Activated B cell treated with CpG ODN at 0.5 μM for 24 hours (primary cell): ENCODE measurements at regions of chr14 and their contacts with region 1.

Region 1: DNA sequence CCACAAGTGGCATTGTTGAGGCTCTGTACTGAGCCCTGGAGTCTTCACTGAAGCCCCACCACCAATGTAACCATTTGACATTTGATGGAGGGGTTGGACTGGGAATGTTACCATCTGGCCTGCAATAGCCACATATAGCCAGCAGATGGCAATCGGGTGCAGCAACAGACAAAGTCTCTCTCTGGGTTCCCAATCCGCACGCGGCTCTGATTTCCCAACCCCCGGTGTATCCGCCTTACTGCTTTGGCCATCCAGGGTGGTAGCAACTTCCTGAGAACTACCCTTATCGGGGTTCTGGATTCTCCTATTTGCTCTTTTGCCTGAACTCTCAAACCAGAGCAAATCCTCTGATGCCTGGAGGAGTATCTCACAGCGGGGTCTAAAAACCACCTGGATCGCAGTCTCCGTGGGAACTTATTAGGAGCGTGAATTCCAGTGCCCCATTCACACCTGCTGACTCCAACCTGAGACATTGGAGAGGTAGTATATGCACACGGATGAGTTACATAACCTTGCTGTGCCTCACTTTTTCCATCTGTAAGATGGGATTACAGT is 14.2 kb downstream of the VRTN start:
- DNase-seq: peak; percentile 56
- ATAC-seq: peak; percentile 87
- H3K4me3 Mint-ChIP-seq: no peak overlapping the region
- H3K27ac Mint-ChIP-seq: no peak overlapping the region
- H3K4me1 Mint-ChIP-seq: peaks cover 3% of the 10 kb centered on the region
- H3K27me3 Mint-ChIP-seq: peaks cover 2% of the 10 kb centered on the region
- CTCF ChIP-seq: peak; percentile 80

Region 2: GRCh38 chr14:74401504-74402241 is 39.2 kb after region 1 on chr14:
- CTCF ChIA-PET with region 1: interaction called, 5 read pairs
- POLR2A ChIA-PET with region 1: no interaction called
- intact Hi-C with region 1: loop called (anchors 1 kb)
- DNase-seq: peak; percentile 74
- ATAC-seq: peak; percentile 90
- H3K4me3 Mint-ChIP-seq: peak overlapping the region; percentile 87
- H3K27ac Mint-ChIP-seq: peak overlapping the region; percentile 98
- H3K4me1 Mint-ChIP-seq: peaks cover 54% of the 10 kb centered on the region
- H3K27me3 Mint-ChIP-seq: no peaks in the 10 kb centered on the region
- CTCF ChIP-seq: no peak

Region 3: GRCh38 chr14:74478996-74479635 is 116.7 kb after region 1 on chr14:
- CTCF ChIA-PET with region 1: interaction called, 13 read pairs
- POLR2A ChIA-PET with region 1: no interaction called
- intact Hi-C with region 1: loop called (anchors 1 kb)
- DNase-seq: no peak
- ATAC-seq: no peak
- H3K4me3 Mint-ChIP-seq: no peak overlapping the region
- H3K27ac Mint-ChIP-seq: no peak overlapping the region
- H3K4me1 Mint-ChIP-seq: no peaks in the 10 kb centered on the region
- H3K27me3 Mint-ChIP-seq: no peaks in the 10 kb centered on the region
- CTCF ChIP-seq: no peak

Region 4: GRCh38 chr14:74684434-74684833 is 322.0 kb after region 1 on chr14:
- CTCF ChIA-PET with region 1: no interaction called
- POLR2A ChIA-PET with region 1: no interaction called
- intact Hi-C with region 1: loop called (anchors 10 kb)
- DNase-seq: peak; percentile 18
- ATAC-seq: peak; percentile 90
- H3K4me3 Mint-ChIP-seq: peak overlapping the region; percentile 58
- H3K27ac Mint-ChIP-seq: peak overlapping the region; percentile 68
- H3K4me1 Mint-ChIP-seq: peaks cover 31% of the 10 kb centered on the region
- H3K27me3 Mint-ChIP-seq: no peaks in the 10 kb centered on the region
- CTCF ChIP-seq: no peak

Region 5: DNA sequence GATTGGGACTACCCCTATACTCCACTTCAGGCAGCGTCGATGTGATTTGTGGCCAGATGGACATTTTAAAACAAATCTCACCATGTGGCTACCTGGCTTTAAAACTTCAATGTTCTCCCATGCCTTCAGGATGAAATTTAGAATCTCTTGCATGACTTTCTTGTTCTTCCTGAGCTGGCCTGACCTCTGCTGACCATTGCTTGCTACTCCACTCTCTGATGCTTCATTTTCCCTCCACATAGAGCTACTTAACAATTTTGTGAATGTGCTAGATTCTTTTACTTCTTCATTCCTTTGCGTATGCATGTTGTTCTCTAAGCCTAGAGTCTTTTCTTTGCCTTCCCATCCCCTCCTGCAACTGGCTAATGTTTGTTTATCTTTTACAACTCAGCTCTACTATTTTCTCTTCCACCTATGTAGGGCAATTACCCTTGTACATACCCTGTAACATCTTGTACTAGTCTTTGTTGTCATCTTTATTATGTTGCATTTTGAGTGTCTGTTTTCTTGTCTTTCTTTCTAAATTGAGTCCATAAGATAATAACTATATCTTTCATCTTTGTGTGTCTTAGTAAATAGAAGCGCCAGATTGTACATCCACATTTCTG is 441.9 kb after region 1 on chr14:
- CTCF ChIA-PET with region 1: no interaction called
- POLR2A ChIA-PET with region 1: no interaction called
- intact Hi-C with region 1: loop called (anchors 5 kb)
- DNase-seq: no peak
- ATAC-seq: no peak
- H3K4me3 Mint-ChIP-seq: no peak overlapping the region
- H3K27ac Mint-ChIP-seq: no peak overlapping the region
- H3K4me1 Mint-ChIP-seq: no peaks in the 10 kb centered on the region
- H3K27me3 Mint-ChIP-seq: no peaks in the 10 kb centered on the region
- CTCF ChIP-seq: no peak